ENCODE measurements at regions of chr17 and their contacts with region 1.

Region 1: DNA sequence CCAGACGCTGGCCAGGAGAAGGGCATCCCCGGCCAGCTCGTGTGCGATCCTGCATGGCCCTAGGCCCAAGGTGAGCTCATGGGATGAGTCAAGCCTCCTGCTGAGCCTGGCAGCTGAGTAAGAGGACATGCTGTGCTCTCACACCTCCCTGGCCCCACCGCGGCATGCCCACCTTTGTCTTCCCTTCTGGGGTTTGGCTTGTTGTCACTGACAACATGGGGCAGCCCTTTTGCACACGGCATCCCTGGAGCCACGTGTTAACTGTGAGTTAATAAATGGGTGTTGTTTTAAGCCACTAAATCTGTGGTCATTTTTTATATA is 8.9 kb upstream of the TNS4 start:
- DNase-seq: peak; percentile 88
- H3K4me3 Mint-ChIP-seq: no peak overlapping the region
- H3K27ac Mint-ChIP-seq: no peak overlapping the region
- H3K4me1 Mint-ChIP-seq: peaks cover 41% of the 10 kb centered on the region
- H3K27me3 Mint-ChIP-seq: peaks cover 61% of the 10 kb centered on the region
- CTCF ChIP-seq: no peak

Region 2: GRCh38 chr17:40522250-40522952 is 12.1 kb after region 1 on chr17:
- CTCF ChIA-PET with region 1: interaction called, 392 read pairs
- intact Hi-C with region 1: no loop called
- DNase-seq: no peak
- H3K4me3 Mint-ChIP-seq: no peak overlapping the region
- H3K27ac Mint-ChIP-seq: no peak overlapping the region
- H3K4me1 Mint-ChIP-seq: peaks cover 32% of the 10 kb centered on the region
- H3K27me3 Mint-ChIP-seq: peaks cover 30% of the 10 kb centered on the region
- CTCF ChIP-seq: no peak

Region 3: DNA sequence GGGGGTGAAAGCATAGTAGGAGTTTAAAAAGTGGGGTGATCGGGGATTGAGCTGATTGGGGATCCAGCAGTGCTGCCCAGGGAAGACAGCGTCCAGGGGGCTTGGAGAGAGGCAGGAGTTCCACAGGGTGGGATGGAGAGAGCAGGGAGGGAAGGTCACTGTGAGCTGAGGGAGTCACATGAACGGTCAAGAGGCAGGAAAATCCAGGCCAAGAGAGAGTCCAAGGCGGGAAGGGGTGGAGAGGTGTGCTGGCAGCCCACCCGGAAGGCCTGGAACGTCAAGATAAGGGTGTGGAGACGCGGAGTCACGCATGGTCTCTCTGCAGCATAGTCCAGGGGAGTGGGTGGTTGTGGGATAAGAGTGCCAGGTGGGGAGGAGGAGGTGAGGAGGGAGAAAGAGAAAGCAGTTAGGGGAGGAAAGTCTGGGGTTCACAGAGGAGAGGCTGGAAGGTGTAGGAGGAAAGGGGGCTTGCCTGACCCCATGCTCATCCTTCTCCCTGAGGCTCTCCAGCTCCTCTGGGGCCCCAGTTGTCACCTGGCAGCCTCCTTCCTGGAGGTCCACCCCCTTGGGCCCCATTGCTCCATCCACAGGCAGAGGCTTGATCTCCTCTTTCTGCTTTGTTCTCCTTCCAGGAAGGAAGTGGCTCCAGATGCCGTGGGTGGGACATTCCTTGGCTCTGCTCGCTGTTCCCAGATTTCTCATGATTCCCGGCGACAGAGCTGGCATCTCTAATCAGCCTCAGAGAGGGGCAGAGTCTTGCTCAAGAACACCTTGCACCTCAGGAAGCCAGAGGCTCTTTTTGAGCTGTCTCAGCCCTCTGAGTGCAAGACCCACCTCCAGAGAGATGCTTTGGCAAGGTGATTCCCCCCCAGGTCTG is 26.2 kb after region 1 on chr17:
- CTCF ChIA-PET with region 1: interaction called, 262 read pairs
- intact Hi-C with region 1: no loop called
- DNase-seq: peak; percentile 68
- H3K4me3 Mint-ChIP-seq: no peak overlapping the region
- H3K27ac Mint-ChIP-seq: no peak overlapping the region
- H3K4me1 Mint-ChIP-seq: peaks cover 24% of the 10 kb centered on the region
- H3K27me3 Mint-ChIP-seq: peaks cover 85% of the 10 kb centered on the region
- CTCF ChIP-seq: no peak

Region 4: DNA sequence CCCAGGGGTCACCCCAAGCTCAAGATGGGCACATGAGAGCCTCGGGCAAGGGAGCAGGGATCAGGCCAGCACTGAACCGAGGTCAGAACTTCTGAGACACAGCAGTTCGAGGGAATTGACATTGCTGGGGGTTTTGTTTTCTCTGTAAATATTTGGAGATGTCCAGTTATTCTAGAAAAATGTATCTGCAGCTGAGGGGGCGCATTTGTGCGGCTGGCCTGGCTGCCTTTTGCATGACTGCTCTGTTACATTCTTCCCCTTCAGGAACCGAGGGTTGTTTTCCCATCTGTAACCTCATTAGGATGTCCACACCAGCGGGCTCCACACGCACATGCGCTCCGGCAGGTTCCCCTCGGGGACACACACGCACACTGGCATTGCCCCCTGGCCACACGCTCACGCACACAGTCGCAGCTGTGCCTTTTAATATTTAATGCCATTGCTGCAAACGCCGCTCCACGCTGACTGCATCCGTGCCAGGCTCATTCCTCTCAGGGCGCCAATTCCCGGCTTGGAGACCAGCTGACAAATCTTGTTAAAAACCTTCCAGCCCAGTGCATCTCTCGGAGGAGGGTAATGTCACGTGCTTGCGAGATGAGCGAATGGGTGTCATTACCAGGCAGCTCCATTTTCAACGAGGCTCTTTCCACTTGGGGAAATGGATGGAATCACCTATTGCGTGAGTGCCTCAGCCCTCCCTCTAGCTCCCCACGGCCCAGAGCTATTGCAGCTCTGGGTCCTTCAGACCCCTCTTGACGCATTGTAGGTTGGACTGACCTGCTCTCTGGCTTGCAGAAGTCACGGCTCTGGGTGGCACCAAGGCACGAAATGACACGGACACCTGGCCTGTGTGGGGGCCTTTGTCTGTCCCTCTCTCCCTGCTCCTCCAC is 41.8 kb after region 1 on chr17:
- CTCF ChIA-PET with region 1: interaction called, 64 read pairs
- intact Hi-C with region 1: no loop called
- DNase-seq: no peak
- H3K4me3 Mint-ChIP-seq: no peak overlapping the region
- H3K27ac Mint-ChIP-seq: no peak overlapping the region
- H3K4me1 Mint-ChIP-seq: peaks cover 20% of the 10 kb centered on the region
- H3K27me3 Mint-ChIP-seq: peaks cover 60% of the 10 kb centered on the region
- CTCF ChIP-seq: no peak